ENCODE measurements at regions of chr3 and their contacts with region 1.

Region 1: GRCh38 chr3:124887177-124887931 is at the start of gene ITGB5:
- DNase-seq: peak; percentile 83 to 90 (median 85)
- ATAC-seq: peak; percentile 74 to 94 (median 88)
- H3K4me3 ChIP-seq: peak within 1 kb of the TSS; percentile 62 to 99 (median 88)
- H3K27ac ChIP-seq: peak within 1 kb of the TSS; percentile 77 to 97 (median 96)
- H3K4me1 ChIP-seq: peaks cover 0 to 46% (median 31%) of the 10 kb centered on the region in 12 donors
- H3K27me3 ChIP-seq: peaks cover 0 to 15% (median 0%) of the 10 kb centered on the region in 9 donors
- CTCF ChIP-seq: no peak
- POLR2A ChIP-seq: peak in 1 of 2 donors; percentile 83
- total RNA-seq, gene ITGB5: 96.3 to 223 (median 118) TPM

Region 2: GRCh38 chr3:124772081-124772831 is 115.1 kb before region 1 on chr3:
- intact Hi-C with region 1: loop called in 2 of 10 experiments (anchors 2 to 5 kb)
- DNase-seq: peak in 4 of 5 donors; percentile 62 to 73 (median 66)
- ATAC-seq: peak; percentile 35 to 60 (median 49)
- H3K4me3 ChIP-seq: no peak overlapping the region
- H3K27ac ChIP-seq: peak overlapping the region; percentile 22 to 76 (median 70)
- H3K4me1 ChIP-seq: peaks cover 14 to 85% (median 59%) of the 10 kb centered on the region in 12 donors
- H3K27me3 ChIP-seq: no peaks in the 10 kb centered on the region
- CTCF ChIP-seq: no peak
- POLR2A ChIP-seq: no peak

Region 3: GRCh38 chr3:124780761-124781475 is 106.4 kb before region 1 on chr3:
- intact Hi-C with region 1: loop called in 7 of 10 experiments (anchors 2 to 5 kb)
- DNase-seq: peak; percentile 88 to 94 (median 89)
- ATAC-seq: peak; percentile 88 to 91 (median 89)
- H3K4me3 ChIP-seq: peak overlapping the region in 4 of 12 donors; percentile 8 to 20 (median 12)
- H3K27ac ChIP-seq: peak overlapping the region; percentile 77 to 95 (median 91)
- H3K4me1 ChIP-seq: peaks cover 6 to 97% (median 55%) of the 10 kb centered on the region in 12 donors
- H3K27me3 ChIP-seq: no peaks in the 10 kb centered on the region
- CTCF ChIP-seq: no peak
- POLR2A ChIP-seq: peak in 1 of 2 donors; percentile 36

Region 4: GRCh38 chr3:124786441-124787241 is 100.7 kb before region 1 on chr3:
- intact Hi-C with region 1: loop called in 7 of 10 experiments (anchors 2 to 5 kb)
- DNase-seq: no peak
- ATAC-seq: peak in 3 of 4 donors; percentile 22 to 67 (median 57)
- H3K4me3 ChIP-seq: no peak overlapping the region
- H3K27ac ChIP-seq: peak overlapping the region; percentile 48 to 84 (median 74)
- H3K4me1 ChIP-seq: peaks cover 9 to 87% (median 67%) of the 10 kb centered on the region in 12 donors
- H3K27me3 ChIP-seq: no peaks in the 10 kb centered on the region
- CTCF ChIP-seq: peak in 11 of 12 donors; percentile 17 to 62 (median 46)
- POLR2A ChIP-seq: no peak

Region 5: DNA sequence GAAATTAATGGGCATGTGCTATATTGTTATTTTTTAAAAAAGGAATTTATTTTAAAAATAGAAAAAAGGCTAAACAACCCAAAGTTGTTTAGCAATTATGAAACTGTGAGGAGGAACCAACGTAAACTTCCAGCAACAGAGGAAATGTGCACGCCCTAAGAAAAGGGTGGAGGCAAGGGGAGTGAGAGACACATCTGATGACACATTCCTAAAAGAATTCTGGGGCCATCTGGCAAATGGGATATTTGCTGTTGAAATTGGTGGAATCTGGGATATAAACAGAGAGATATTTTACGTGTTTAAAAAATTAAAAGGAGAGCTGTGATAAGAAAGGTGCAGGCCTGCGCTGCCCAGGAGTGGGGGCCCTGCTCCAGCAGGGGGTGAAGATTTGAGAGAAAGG is 98.0 kb after region 1 on chr3:
- intact Hi-C with region 1: no loop called
- DNase-seq: peak in 1 of 5 donors; percentile 35
- ATAC-seq: peak in 3 of 4 donors; percentile 67 to 71 (median 69)
- H3K4me3 ChIP-seq: no peak overlapping the region
- H3K27ac ChIP-seq: peak overlapping the region in 11 of 12 donors; percentile 17 to 83 (median 55)
- H3K4me1 ChIP-seq: peaks cover 4 to 48% (median 22%) of the 10 kb centered on the region in 12 donors
- H3K27me3 ChIP-seq: no peaks in the 10 kb centered on the region
- CTCF ChIP-seq: no peak
- POLR2A ChIP-seq: no peak